Lower leg skin (tissue), 4 donors: ENCODE measurements at regions of chr22 and their contacts with region 1.

Region 1: DNA sequence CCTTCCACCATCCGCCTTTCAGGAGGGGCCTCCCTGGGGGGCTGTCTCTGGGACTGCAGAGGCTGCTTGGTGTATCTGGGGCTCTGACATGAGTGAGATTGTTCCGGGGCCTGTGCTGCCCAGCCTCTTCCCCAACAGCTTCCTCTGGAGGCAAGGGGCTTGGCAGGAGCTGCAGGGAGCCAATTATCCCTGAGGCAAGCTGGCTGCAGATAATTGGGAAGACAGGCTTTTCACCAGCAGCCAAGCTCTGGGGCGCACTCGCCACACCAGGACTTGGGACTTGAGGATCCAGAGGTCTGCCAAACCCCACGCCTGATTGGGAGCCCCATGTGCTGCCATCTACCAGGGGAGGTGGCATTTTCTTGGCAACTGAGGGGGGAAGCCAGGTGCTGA is 15.6 kb upstream of the RTN4R start:
- DNase-seq: no peak
- H3K4me3 ChIP-seq: no peak overlapping the region
- CTCF ChIP-seq: no peak
- POLR2A ChIP-seq: no peak

Region 2: DNA sequence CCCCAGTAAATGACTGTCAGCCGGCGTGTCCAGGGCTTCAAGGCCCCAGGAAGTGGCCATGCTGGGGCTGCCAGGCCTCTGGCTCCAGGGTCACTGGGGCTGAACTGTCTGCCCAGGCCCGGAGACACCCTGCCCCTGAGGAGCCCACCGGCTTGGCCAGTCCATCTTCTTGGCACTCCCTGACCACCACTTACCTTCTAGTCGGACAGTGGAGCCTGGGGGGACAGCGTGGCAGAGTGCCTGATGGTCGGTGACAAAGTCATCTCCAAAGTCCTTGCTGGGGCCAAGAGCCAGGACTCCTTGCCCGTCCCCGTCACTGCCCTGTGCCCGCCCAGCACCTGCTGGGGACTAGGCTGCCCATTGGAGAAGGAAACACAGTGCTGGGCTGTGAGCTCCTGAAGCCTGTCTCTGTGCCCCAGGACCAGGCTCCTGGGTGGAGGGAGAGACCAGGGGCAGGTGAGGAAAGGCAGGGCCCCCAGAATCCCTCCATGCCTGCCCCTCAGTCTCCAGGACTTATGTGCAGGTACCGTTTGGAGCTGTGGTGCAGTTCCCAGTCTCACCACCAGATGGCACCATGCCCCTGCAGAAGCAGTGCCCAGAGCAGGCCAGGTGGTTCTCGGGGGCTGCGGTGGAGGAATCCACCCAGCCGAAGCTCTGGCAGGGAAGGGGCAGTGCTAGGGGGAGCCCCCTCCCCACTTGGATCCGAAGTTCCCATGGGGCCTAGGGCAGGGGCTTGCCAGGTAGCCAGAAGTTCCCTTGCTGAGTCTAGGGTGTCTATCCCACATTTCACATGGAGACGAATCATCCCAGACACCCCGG is 126.8 kb before region 1 on chr22:
- intact Hi-C with region 1: loop called (anchors 2 kb)
- DNase-seq: peak; percentile 76 to 98
- H3K4me3 ChIP-seq: no peak overlapping the region
- CTCF ChIP-seq: peak; percentile 16 to 99 (median 58)
- POLR2A ChIP-seq: no peak

Region 3: DNA sequence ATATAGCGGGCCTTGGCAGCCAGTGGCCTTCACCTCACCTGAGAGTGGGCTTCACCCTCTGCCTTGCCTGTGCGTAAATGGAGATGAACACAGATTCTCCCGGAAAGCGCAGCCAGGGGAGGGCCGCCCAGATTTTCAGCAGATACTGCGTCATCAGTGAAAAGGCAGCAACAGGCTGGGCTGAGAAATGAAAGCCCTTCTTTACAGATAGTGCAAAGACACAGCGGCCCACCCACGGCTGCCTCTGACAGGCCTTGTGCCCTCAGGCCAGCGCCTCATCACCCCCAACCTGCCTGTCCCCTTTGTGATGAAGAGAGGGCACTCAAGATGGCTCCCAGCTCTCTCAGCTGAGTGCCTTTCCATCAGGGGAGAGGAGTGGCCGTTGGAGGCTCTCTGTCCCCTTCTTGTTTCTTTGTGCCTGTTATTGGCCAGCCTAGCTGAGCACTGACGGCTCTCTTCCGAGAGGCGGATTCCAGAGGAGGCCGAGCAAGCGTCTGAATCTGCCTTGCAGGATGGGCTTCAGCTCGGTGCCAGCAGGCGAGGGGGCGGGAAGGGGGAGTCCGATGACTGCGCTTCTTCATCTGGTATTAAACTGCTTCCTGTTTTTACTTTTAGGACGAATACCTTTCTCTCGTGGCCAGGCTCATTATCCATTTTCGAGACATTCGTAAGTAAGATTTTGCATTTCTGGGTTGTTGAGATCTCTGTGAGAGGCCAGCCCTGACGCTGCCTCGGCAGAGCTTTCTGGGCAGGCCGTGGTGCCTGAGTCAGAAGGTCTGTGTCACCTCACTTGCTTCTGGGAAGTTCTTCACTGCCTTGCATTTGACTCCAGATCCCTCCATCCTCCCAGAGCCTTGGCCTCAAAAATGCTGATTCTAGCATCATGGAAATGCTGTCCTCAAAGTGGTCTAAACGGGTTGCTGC is 267.4 kb after region 1 on chr22:
- intact Hi-C with region 1: no loop called
- DNase-seq: no peak
- H3K4me3 ChIP-seq: no peak overlapping the region
- CTCF ChIP-seq: no peak
- POLR2A ChIP-seq: no peak